Cardiac septum (tissue), 1 donor: ENCODE measurements at regions of chr5 and their contacts with region 1.

Region 1: GRCh38 chr5:55672477-55672911 is 39.6 kb downstream of the SLC38A9 start:
- DNase-seq: no peak

Region 2: DNA sequence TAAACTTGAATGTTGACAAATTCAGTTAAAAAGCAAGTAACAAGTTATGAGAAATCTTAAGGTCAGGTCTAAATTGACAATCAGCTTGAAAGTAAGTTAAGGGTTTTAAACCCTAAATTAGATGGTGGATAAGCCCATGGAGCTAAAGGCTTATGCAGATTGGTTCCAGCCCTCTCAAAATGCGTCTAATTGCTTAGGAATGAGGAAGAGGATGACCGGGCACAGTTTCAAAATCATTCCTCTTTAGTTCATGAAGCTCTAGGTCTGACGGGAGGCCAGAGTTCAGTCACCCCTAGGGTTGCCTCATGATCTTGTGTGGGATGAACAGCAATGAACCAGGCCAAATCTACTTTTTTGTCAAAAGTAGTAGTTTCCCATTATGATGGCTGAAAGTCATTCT is 35.8 kb before region 1 on chr5:
- intact Hi-C with region 1: loop called (anchors 5 kb)
- DNase-seq: no peak